CD14-positive monocyte (primary cell): ENCODE measurements at regions of chr10 and their contacts with region 1.

Region 1: DNA sequence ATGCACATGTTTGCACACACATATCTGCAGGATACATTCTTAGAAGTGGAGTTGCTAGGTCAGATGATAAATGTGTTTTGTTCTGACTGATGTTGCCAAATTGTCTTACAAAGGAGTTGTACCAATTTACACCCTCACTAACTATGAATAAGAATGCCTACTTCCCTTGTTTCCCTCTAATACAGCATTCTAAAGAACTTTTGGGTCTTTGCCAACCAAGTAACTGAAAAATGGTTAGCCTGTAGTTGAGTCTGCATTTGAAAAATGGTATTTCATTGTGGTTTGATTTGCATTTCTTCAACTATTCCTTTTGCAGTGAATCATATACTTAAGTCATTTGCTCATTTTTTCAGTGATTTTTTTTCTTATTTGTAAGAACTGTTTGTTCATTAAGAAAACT is 48.4 kb downstream of the TMEM26 start:
- DNase-seq: peak in 1 of 3 donors; percentile 35
- H3K4me3 ChIP-seq: no peak overlapping the region
- H3K4me3 Mint-ChIP-seq: no peak overlapping the region
- H3K27ac ChIP-seq: no peak overlapping the region
- H3K27ac Mint-ChIP-seq: no peak overlapping the region
- H3K4me1 ChIP-seq: no peaks in the 10 kb centered on the region
- H3K4me1 Mint-ChIP-seq: no peaks in the 10 kb centered on the region
- H3K27me3 ChIP-seq: no peaks in the 10 kb centered on the region
- H3K27me3 Mint-ChIP-seq: no peaks in the 10 kb centered on the region
- CTCF ChIP-seq: no peak

Region 2: GRCh38 chr10:60809157-60809556 is 595.6 kb before region 1 on chr10:
- intact Hi-C with region 1: loop called in 1 of 2 experiments (anchors 10 kb)
- DNase-seq: peak; percentile 77 to 93 (median 89)
- H3K4me3 ChIP-seq: peak overlapping the region in 1 of 3 experiments; percentile 35
- H3K4me3 Mint-ChIP-seq: peak overlapping the region in 1 of 2 donors; percentile 60
- H3K27ac ChIP-seq: peak overlapping the region in 1 of 2 donors; percentile 24
- H3K27ac Mint-ChIP-seq: peak overlapping the region in 6 of 7 donors; percentile 58 to 91 (median 75)
- H3K4me1 ChIP-seq: peaks cover 22 to 31% of the 10 kb centered on the region in 2 donors
- H3K4me1 Mint-ChIP-seq: peaks cover 30% of the 10 kb centered on the region
- H3K27me3 ChIP-seq: no peaks in the 10 kb centered on the region
- H3K27me3 Mint-ChIP-seq: peaks cover 0 to 4% (median 2%) of the 10 kb centered on the region in 3 donors
- CTCF ChIP-seq: no peak